Endothelial cell of umbilical vein (primary cell): ENCODE measurements at regions of chr2 and their contacts with region 1.

Region 1: DNA sequence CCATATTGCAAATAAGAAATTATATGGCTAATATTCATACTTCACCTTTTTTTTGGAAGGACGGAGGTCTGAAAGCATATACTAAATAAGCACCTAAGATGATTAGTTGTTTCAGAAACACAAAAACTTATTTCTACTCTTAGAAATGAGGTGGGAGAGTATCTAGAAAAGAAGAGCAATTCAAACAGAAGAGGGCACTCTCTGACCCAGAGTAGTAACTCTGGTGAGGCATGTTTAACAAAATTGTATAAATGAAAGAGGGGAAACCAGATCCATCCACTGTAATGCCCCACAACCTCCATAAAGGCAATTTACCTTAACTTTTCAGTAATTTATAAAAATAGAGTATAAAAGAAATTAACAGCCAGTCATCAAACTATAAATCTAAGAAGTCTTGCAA is 669.6 kb upstream of the VRK2 start:
- DNase-seq: peak; percentile 4
- H3K4me3 ChIP-seq: no peak overlapping the region
- H3K27ac ChIP-seq: no peak overlapping the region
- H3K4me1 ChIP-seq: peaks cover 17% of the 10 kb centered on the region
- H3K27me3 ChIP-seq: no peaks in the 10 kb centered on the region
- CTCF ChIP-seq: no peak
- POLR2A ChIP-seq: no peak

Region 2: DNA sequence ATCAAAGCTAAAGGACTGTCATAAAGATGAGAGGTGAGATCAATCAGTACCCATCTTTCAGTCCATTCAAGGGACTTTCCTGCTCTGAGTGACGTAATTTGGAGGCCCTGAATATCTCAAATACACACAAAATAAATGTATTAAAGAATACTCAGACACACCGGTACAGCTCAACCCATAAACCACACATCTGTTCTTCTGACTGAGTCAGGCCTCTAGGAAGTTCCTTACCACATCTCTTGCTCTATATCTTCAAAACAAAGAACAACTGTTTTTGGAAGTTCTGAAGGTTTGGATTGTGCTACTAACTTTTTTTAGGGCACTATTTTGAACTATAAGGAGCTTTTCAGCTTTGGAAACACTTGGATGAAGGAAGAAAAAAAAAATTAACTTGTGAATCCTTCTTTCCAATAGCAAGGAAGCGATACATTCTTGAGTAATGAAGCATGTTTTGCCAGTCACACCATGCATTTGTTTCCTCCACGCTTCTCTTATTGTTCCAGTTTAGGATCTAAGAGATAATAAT is 196.9 kb before region 1 on chr2:
- CTCF ChIA-PET with region 1: no interaction called
- POLR2A ChIA-PET with region 1: no interaction called
- dilution Hi-C with region 1: no loop called
- intact Hi-C with region 1: loop called (anchors 1 kb)
- DNase-seq: peak; percentile 90
- H3K4me3 ChIP-seq: no peak overlapping the region
- H3K27ac ChIP-seq: peak overlapping the region; percentile 95
- H3K4me1 ChIP-seq: peaks cover 42% of the 10 kb centered on the region
- H3K27me3 ChIP-seq: no peaks in the 10 kb centered on the region
- CTCF ChIP-seq: no peak
- POLR2A ChIP-seq: peak; percentile 44

Region 3: DNA sequence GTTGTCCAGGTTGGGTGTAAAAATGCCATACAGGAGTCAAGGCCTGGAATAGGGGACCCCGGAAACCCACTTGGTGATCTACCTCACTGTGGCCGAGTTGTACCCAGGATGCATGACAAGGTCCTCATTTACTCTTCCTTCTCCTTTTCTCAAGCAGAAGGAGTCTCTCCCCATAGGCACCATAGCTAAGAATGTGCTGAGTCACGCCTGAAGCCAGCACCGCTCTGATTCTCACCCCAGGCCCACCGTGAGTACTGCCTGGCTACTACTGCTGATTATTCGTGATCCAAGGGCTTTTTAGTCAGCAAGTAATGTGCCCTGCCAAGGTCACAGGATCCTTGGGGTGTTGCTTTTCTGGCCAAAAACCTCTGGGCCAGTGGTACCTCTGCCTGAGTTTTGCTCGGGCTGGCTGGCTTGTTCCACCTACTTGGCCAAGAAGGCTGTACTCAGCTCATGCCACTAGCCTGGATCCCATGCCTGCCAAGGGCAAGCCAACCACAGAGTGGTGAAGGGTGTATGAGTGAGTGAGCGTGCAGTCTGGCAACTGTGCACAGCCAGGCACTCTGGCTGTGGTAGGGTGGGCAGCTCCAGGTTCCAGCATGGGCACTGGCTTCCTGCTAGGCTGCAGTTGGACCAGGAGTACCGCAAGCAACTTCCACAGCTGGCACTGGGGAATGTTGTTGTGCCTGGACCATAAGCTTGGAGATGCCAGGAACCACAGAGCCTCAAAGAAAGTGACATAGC is 19.5 kb after region 1 on chr2:
- CTCF ChIA-PET with region 1: no interaction called
- POLR2A ChIA-PET with region 1: no interaction called
- dilution Hi-C with region 1: no loop called
- intact Hi-C with region 1: no loop called
- DNase-seq: no peak
- H3K4me3 ChIP-seq: no peak overlapping the region
- H3K27ac ChIP-seq: no peak overlapping the region
- H3K4me1 ChIP-seq: no peaks in the 10 kb centered on the region
- H3K27me3 ChIP-seq: no peaks in the 10 kb centered on the region
- CTCF ChIP-seq: no peak
- POLR2A ChIP-seq: no peak